Activated CD4-positive, alpha-beta memory T cell treated with anti-CD3 and anti-CD28 coated beads for 36 hours (primary cell): ENCODE measurements at regions of chr7 and their contacts with region 1.

Region 1: DNA sequence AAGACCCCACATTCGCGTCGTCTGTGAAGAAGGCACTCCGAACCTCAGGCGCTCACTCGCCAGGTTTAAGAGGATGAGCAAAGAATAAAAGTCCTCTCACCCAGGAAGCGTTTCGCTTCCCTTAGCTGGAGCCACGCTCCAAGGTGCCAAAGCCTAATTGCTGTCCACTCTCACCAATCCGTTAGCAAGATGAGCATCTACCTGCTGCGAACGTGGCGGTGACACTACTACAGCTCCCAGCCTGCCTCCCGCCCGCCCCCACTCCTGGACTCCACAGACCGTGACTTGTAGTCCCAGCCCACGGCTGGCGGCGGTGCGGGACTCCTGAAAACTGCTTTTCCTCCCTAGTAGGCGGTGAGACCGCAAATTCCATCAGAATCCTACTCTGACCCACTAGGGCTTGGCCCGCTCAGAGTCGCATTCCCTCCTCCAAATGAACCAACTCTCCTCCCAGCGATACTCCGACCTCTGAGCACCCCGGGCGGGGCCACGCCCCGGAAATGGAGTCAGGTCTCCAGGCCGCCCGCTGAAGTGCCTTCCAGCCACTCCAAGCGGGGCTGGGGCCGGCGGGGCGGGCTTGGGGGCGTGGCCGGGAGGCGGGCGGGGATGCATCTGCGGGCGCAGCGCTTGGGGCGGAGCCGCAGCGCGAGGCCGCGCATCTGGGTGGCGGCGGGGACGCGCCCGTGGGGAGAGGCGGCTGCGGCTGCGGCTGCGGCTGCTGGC is 521 bp upstream of the PTPN12 start:
- DNase-seq: peak; percentile 99
- H3K4me3 Mint-ChIP-seq: peak overlapping the region; percentile 97
- H3K27ac Mint-ChIP-seq: peak overlapping the region; percentile 87
- H3K4me1 Mint-ChIP-seq: peaks cover 13% of the 10 kb centered on the region
- H3K27me3 Mint-ChIP-seq: no peaks in the 10 kb centered on the region

Region 2: DNA sequence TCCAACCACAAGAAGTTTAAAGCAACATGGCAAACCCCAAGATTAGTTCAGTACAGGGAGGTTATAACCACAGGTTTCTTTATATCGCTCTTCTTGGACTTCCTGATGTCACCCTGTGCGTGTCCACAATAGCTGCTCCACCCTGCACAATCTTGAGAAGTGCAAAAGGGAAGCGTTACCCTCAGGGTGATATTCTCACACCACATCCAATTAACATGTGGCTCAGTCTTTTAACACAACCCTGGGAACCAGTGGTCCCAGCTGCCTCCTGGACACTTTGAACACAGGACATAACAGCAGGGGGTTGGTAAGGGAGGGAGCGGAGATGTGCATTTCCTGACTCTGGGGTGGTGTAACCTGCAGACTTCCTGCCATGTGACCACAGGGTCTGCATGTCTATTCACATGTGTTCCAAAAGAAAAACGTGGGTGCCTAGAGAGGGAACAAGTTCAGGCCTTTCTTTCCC is 185.0 kb before region 1 on chr7:
- CTCF ChIA-PET with region 1: no interaction called
- POLR2A ChIA-PET with region 1: no interaction called
- intact Hi-C with region 1: loop called (anchors 2 kb)
- DNase-seq: peak; percentile 57
- H3K4me3 Mint-ChIP-seq: peak overlapping the region; percentile 53
- H3K27ac Mint-ChIP-seq: peak overlapping the region; percentile 71
- H3K4me1 Mint-ChIP-seq: peaks cover 49% of the 10 kb centered on the region
- H3K27me3 Mint-ChIP-seq: no peaks in the 10 kb centered on the region

Region 3: DNA sequence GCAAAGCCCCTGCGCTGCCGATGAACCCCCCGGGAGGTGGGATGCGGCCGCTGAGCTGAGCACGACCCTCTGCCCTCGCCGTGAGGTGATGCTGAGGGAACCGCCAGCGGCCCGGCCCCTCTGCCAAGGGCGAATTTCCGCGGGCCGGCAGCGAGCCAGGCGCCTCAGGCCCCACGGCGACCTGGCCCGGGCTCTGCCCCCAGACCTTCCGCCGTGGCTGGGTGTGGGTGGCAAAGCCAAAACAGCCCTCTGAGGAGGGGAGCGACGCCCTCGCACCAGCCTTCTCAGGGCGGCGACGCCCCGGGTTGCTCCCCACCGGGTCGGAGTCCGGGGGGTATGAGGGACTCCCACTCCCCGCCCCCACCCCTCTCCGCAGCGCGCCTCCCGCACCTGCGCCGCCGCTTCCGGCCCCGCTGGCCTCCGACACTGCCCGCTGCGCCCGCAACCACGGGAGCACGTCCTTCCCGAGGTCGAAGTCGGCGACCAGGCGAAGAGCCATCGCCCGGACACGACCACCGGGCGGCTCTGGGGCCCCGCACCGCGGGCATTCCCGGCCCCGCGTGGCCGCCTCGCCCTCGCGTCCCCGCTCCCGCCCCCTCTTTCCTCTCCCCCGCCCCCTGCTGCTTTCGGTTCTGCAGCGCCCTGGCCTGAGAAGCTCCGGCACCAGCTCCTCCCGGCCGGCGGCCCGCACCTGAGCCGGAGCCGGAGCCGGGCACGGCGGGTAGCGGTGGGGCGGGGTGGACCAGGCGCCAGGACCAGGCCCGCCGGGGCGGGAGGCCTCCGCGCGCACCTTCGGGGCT is 120.6 kb before region 1 on chr7 and contains the start of gene GSAP:
- CTCF ChIA-PET with region 1: no interaction called
- POLR2A ChIA-PET with region 1: no interaction called
- intact Hi-C with region 1: loop called (anchors 2 kb)
- DNase-seq: peak; percentile 61
- H3K4me3 Mint-ChIP-seq: peak within 1 kb of the TSS; percentile 59
- H3K27ac Mint-ChIP-seq: no peak within 1 kb of the TSS
- H3K4me1 Mint-ChIP-seq: peaks cover 32% of the 10 kb centered on the region
- H3K27me3 Mint-ChIP-seq: peaks cover 3% of the 10 kb centered on the region
- total RNA-seq, gene GSAP: 1.7 to 1.9 TPM

Region 4: GRCh38 chr7:77428041-77428473 is 108.5 kb before region 1 on chr7:
- CTCF ChIA-PET with region 1: no interaction called
- POLR2A ChIA-PET with region 1: no interaction called
- intact Hi-C with region 1: no loop called
- DNase-seq: peak; percentile 34
- H3K4me3 Mint-ChIP-seq: no peak overlapping the region
- H3K27ac Mint-ChIP-seq: peak overlapping the region; percentile 38
- H3K4me1 Mint-ChIP-seq: peaks cover 21% of the 10 kb centered on the region
- H3K27me3 Mint-ChIP-seq: peaks cover 3% of the 10 kb centered on the region

Region 5: GRCh38 chr7:77696198-77697028 is 159.8 kb after region 1 on chr7 and contains the start of gene RSBN1L:
- CTCF ChIA-PET with region 1: no interaction called
- POLR2A ChIA-PET with region 1: no interaction called
- intact Hi-C with region 1: loop called (anchors 1 kb)
- DNase-seq: peak; percentile 99
- H3K4me3 Mint-ChIP-seq: peak within 1 kb of the TSS; percentile 89
- H3K27ac Mint-ChIP-seq: peak within 1 kb of the TSS; percentile 95
- H3K4me1 Mint-ChIP-seq: peaks cover 51% of the 10 kb centered on the region
- H3K27me3 Mint-ChIP-seq: no peaks in the 10 kb centered on the region
- total RNA-seq, gene RSBN1L: 18.5 to 21.1 TPM

Region 6: GRCh38 chr7:77975672-77976480 is 439.3 kb after region 1 on chr7:
- CTCF ChIA-PET with region 1: no interaction called
- POLR2A ChIA-PET with region 1: no interaction called
- intact Hi-C with region 1: no loop called
- DNase-seq: no peak
- H3K4me3 Mint-ChIP-seq: no peak overlapping the region
- H3K27ac Mint-ChIP-seq: no peak overlapping the region
- H3K4me1 Mint-ChIP-seq: no peaks in the 10 kb centered on the region
- H3K27me3 Mint-ChIP-seq: peaks cover 3% of the 10 kb centered on the region